B cell (primary cell): ENCODE measurements at regions of chr13 and their contacts with region 1.

Region 1: DNA sequence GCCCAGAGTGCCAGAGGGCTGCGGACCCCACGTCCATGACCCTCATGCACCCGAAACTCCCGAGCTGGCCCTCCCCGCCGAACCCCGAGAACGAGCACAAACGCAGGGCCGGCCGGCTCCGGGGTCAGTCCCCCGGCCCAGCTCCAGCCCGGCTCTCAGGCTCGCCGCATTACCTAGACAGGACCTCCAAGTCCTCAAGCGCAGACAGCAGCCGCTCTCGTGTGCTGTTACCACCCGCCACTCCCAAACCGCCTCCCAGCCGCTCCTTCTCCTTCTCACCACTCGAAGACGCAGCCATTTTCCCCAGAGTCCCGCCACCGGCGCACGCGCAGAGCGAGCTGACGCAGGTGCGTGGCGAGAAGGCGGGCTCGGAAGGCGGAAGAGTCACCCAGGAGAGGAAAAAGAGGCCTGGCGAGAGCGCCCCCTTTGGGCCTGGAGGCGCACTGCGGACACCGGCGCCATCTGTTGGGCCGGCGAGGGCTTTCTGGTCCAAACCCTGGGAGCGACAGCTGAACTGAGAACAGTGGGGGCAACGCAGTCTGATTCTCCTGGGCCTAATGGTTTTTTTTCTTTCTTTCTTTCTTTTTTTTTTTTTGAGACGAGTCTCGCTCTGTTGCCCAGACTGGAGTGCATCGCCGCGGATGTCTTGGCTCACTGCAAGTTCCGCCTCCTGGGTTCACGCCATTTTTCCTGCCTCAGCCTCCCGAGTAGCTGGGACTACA is at the start of gene MED4:
- DNase-seq: peak; percentile 97
- ATAC-seq: peak; percentile 99
- H3K4me3 ChIP-seq: peak within 1 kb of the TSS; percentile 86 to 99 (median 92)
- H3K4me3 Mint-ChIP-seq: peak within 1 kb of the TSS; percentile 94
- H3K27ac ChIP-seq: peak within 1 kb of the TSS; percentile 83 to 89
- H3K27ac Mint-ChIP-seq: peak within 1 kb of the TSS; percentile 95
- H3K4me1 ChIP-seq: peaks cover 16 to 17% of the 10 kb centered on the region in 2 donors
- H3K4me1 Mint-ChIP-seq: peaks cover 35% of the 10 kb centered on the region
- H3K27me3 ChIP-seq: no peaks in the 10 kb centered on the region
- H3K27me3 Mint-ChIP-seq: peaks cover 10% of the 10 kb centered on the region
- CTCF ChIP-seq: peak; percentile 99
- total RNA-seq, gene MED4: 49.7 and 50.1 TPM in 2 replicates

Region 2: GRCh38 chr13:46796515-46797474 is 1298.1 kb before region 1 on chr13 and contains the start of gene ESD:
- CTCF ChIA-PET with region 1: no interaction called
- POLR2A ChIA-PET with region 1: no interaction called
- intact Hi-C with region 1: loop called (anchors 10 kb)
- DNase-seq: peak; percentile 89
- ATAC-seq: peak; percentile 93
- H3K4me3 ChIP-seq: peak within 1 kb of the TSS; percentile 56 to 99 (median 77)
- H3K4me3 Mint-ChIP-seq: peak within 1 kb of the TSS; percentile 90
- H3K27ac ChIP-seq: peak within 1 kb of the TSS; percentile 78 to 89
- H3K27ac Mint-ChIP-seq: peak within 1 kb of the TSS; percentile 93
- H3K4me1 ChIP-seq: peaks cover 16 to 18% of the 10 kb centered on the region in 2 donors
- H3K4me1 Mint-ChIP-seq: peaks cover 30% of the 10 kb centered on the region
- H3K27me3 ChIP-seq: no peaks in the 10 kb centered on the region
- H3K27me3 Mint-ChIP-seq: no peaks in the 10 kb centered on the region
- CTCF ChIP-seq: no peak
- total RNA-seq, gene ESD: 52.9 and 53.4 TPM in 2 replicates

Region 3: GRCh38 chr13:48078251-48078656 is 16.7 kb before region 1 on chr13:
- CTCF ChIA-PET with region 1: interaction called, 27 read pairs
- POLR2A ChIA-PET with region 1: interaction called, 3 read pairs
- intact Hi-C with region 1: loop called (anchors 1 kb)
- DNase-seq: peak; percentile 81
- ATAC-seq: peak; percentile 99
- H3K4me3 ChIP-seq: no peak overlapping the region
- H3K4me3 Mint-ChIP-seq: no peak overlapping the region
- H3K27ac ChIP-seq: peak overlapping the region in 1 of 2 donors; percentile 55
- H3K27ac Mint-ChIP-seq: peak overlapping the region; percentile 1
- H3K4me1 ChIP-seq: peaks cover 5 to 6% of the 10 kb centered on the region in 2 donors
- H3K4me1 Mint-ChIP-seq: peaks cover 9% of the 10 kb centered on the region
- H3K27me3 ChIP-seq: no peaks in the 10 kb centered on the region
- H3K27me3 Mint-ChIP-seq: no peaks in the 10 kb centered on the region
- CTCF ChIP-seq: peak; percentile 74

Region 4: DNA sequence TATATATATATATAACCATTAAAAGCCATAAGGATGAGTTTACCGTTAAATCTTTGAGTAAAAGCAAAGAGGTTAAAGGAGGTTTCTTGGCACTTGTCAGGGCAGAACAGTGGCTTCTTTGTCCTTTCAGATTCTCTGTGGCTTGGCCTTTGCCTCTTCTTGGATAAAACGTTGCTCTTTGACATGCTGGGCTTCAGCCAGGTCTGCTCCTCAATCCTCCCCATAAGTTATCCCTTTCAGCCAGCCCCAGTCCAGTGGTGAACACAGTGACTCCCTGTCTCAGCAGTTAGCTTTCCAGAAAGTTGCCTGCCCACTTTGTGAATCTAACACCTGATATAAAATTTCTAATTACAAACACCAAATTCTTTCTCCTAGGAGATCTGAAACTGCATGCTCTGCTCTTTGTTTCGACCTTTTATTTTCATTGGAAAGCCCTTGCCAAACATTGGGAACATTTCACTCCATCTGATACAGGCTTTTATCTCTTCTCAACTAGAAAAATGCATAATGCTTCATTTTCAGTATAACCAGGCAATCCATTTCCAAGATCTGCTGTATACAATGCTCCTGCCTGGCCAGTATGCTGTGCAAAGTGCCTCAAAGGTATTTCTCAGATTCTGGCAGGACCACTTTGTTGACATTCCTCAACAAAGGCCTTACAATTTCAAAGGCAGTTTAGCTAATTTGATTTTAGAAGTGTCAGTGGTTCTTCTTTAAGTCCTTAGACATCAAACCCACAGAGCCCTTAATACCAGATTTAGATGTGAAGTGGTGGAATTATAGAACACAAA is 16.2 kb after region 1 on chr13:
- CTCF ChIA-PET with region 1: no interaction called
- POLR2A ChIA-PET with region 1: no interaction called
- intact Hi-C with region 1: no loop called
- DNase-seq: no peak
- ATAC-seq: no peak
- H3K4me3 ChIP-seq: no peak overlapping the region
- H3K4me3 Mint-ChIP-seq: no peak overlapping the region
- H3K27ac ChIP-seq: no peak overlapping the region
- H3K27ac Mint-ChIP-seq: no peak overlapping the region
- H3K4me1 ChIP-seq: no peaks in the 10 kb centered on the region
- H3K4me1 Mint-ChIP-seq: no peaks in the 10 kb centered on the region
- H3K27me3 ChIP-seq: peaks cover 0 to 7% (median 0%) of the 10 kb centered on the region in 4 experiments
- H3K27me3 Mint-ChIP-seq: peaks cover 38% of the 10 kb centered on the region
- CTCF ChIP-seq: no peak